T-cell (primary cell): ENCODE measurements at regions of chr13 and their contacts with region 1.

Region 1: GRCh38 chr13:26941345-26942174 is 181.0 kb upstream of the GPR12 start:
- DNase-seq: no peak
- ATAC-seq: no peak
- H3K4me3 ChIP-seq: no peak overlapping the region
- H3K4me3 Mint-ChIP-seq: no peak overlapping the region
- H3K27ac ChIP-seq: no peak overlapping the region
- H3K27ac Mint-ChIP-seq: no peak overlapping the region
- H3K4me1 ChIP-seq: no peaks in the 10 kb centered on the region
- H3K4me1 Mint-ChIP-seq: no peaks in the 10 kb centered on the region
- H3K27me3 ChIP-seq: peaks cover 0 to 3% of the 10 kb centered on the region in 2 experiments
- H3K27me3 Mint-ChIP-seq: peaks cover 9 to 10% of the 10 kb centered on the region in 2 donors

Region 2: DNA sequence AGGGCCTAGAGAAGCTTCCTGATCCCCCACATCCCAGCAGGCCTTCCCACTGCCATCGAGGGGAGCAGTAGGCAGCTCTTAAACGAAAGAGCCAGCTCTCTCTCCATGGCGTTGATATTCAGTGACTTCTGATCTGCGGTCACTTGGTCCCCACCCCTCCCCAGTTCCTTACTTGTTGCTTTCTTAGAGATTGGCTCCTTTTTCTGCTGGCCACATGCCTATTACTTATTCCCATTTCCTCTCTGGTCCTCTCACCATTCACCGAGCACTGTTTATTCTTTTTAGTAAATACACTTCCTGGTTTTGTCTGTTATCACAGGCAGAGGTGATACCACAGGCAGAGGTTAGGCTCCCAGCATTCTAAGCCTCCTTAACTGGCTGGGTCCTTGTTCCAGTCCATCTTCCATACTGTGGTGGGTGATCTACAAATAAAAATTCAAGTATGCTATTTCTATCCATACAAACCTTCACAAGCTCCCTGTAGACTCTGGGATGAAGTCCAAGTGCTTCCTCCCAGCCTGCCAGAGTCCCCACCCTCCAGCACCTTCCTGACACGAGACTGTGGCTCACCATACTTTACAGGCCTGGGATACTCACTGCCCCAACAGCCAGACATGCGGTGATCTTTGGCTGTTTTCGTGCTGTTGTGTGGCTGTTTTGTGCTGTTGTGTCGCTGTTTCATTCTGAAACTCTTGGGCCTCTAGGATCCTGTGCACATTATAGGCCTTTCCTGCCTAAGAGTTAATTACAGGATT is 1253.9 kb before region 1 on chr13:
- CTCF ChIA-PET with region 1: no interaction called
- POLR2A ChIA-PET with region 1: interaction called in 1 of 2 experiments, 12 read pairs
- DNase-seq: no peak
- ATAC-seq: no peak
- H3K4me3 ChIP-seq: no peak overlapping the region
- H3K4me3 Mint-ChIP-seq: no peak overlapping the region
- H3K27ac ChIP-seq: no peak overlapping the region
- H3K27ac Mint-ChIP-seq: no peak overlapping the region
- H3K4me1 ChIP-seq: no peaks in the 10 kb centered on the region
- H3K4me1 Mint-ChIP-seq: no peaks in the 10 kb centered on the region
- H3K27me3 ChIP-seq: peaks cover 0 to 4% of the 10 kb centered on the region in 2 experiments
- H3K27me3 Mint-ChIP-seq: peaks cover 4 to 5% of the 10 kb centered on the region in 2 donors

Region 3: GRCh38 chr13:26707122-26708006 is 234.2 kb before region 1 on chr13:
- CTCF ChIA-PET with region 1: no interaction called
- POLR2A ChIA-PET with region 1: no interaction called
- DNase-seq: peak in 27 of 35 experiments; percentile 9 to 66 (median 28)
- ATAC-seq: peak; percentile 58 to 70 (median 61)
- H3K4me3 ChIP-seq: no peak overlapping the region
- H3K4me3 Mint-ChIP-seq: no peak overlapping the region
- H3K27ac ChIP-seq: no peak overlapping the region
- H3K27ac Mint-ChIP-seq: no peak overlapping the region
- H3K4me1 ChIP-seq: peaks cover 0 to 2% of the 10 kb centered on the region in 2 experiments
- H3K4me1 Mint-ChIP-seq: no peaks in the 10 kb centered on the region
- H3K27me3 ChIP-seq: peaks cover 0 to 18% of the 10 kb centered on the region in 2 experiments
- H3K27me3 Mint-ChIP-seq: peaks cover 3 to 18% of the 10 kb centered on the region in 2 donors